Natural killer cell (primary cell): ENCODE measurements at regions of chr13 and their contacts with region 1.

Region 1: DNA sequence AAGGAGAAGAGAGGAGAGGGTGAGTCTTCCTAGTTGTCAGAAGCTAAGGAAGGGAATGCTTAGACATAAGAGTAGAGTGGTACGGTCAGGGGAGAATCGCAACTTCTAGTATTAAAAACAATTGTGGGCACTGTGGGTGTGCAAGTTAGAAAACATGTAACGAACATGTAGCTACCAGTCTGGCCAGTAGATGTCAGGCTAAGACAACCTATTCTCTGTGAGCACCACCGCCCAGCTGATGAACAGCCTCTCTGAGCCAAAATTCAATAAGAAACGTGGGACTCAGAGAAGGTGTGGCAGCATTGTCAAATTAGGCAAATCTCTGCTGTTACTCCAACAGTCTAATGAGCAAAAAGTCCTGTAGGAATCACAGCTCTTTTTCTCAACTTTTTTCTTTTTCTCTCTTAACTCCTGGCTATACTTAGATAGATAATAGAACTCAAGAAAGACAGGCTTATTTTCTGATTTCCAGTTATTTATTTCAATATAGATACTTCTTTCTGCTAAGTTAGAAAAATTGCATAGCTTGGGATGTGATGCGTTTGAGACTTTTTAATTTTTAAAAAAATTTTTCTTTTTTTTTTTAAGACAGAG is 186.2 kb downstream of the USP12 start:
- DNase-seq: peak; percentile 48 to 88
- ATAC-seq: peak; percentile 81 to 92 (median 91)
- H3K4me3 ChIP-seq: no peak overlapping the region
- H3K4me3 Mint-ChIP-seq: no peak overlapping the region
- H3K27ac ChIP-seq: no peak overlapping the region
- H3K27ac Mint-ChIP-seq: no peak overlapping the region
- H3K4me1 ChIP-seq: peaks cover 10% of the 10 kb centered on the region
- H3K4me1 Mint-ChIP-seq: peaks cover 4 to 5% of the 10 kb centered on the region in 2 donors
- H3K27me3 ChIP-seq: no peaks in the 10 kb centered on the region
- H3K27me3 Mint-ChIP-seq: peaks cover 10 to 15% of the 10 kb centered on the region in 2 donors
- CTCF ChIP-seq: peak; percentile 80

Region 2: GRCh38 chr13:26951581-26952177 is 33.7 kb before region 1 on chr13:
- intact Hi-C with region 1: no loop called
- DNase-seq: no peak
- ATAC-seq: no peak
- H3K4me3 ChIP-seq: no peak overlapping the region
- H3K4me3 Mint-ChIP-seq: no peak overlapping the region
- H3K27ac ChIP-seq: no peak overlapping the region
- H3K27ac Mint-ChIP-seq: no peak overlapping the region
- H3K4me1 ChIP-seq: no peaks in the 10 kb centered on the region
- H3K4me1 Mint-ChIP-seq: no peaks in the 10 kb centered on the region
- H3K27me3 ChIP-seq: no peaks in the 10 kb centered on the region
- H3K27me3 Mint-ChIP-seq: no peaks in the 10 kb centered on the region
- CTCF ChIP-seq: no peak

Region 3: DNA sequence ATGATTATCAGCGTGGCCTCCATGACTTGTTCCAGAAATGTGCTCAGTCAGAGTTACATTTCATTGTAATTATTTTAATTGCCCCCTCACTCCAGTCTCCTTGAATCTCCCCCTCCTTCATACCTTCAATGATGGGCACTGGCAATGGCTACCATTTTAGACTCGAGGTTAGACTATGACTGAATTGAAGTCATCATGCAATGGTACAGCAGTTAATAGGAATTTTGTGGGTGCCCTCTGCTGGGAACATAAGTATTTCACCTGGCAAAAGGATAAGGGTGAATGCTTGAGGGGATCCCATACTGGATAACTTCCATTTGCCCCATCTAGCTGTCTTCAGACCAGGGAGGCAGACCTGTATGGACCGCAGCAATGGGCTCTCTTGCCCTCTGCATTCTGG is 218.5 kb after region 1 on chr13:
- intact Hi-C with region 1: loop called (anchors 2 kb)
- DNase-seq: peak in 1 of 2 donors; percentile 25
- ATAC-seq: no peak
- H3K4me3 ChIP-seq: no peak overlapping the region
- H3K4me3 Mint-ChIP-seq: no peak overlapping the region
- H3K27ac ChIP-seq: no peak overlapping the region
- H3K27ac Mint-ChIP-seq: no peak overlapping the region
- H3K4me1 ChIP-seq: no peaks in the 10 kb centered on the region
- H3K4me1 Mint-ChIP-seq: no peaks in the 10 kb centered on the region
- H3K27me3 ChIP-seq: no peaks in the 10 kb centered on the region
- H3K27me3 Mint-ChIP-seq: peaks cover 9 to 18% of the 10 kb centered on the region in 2 donors
- CTCF ChIP-seq: no peak

Region 4: DNA sequence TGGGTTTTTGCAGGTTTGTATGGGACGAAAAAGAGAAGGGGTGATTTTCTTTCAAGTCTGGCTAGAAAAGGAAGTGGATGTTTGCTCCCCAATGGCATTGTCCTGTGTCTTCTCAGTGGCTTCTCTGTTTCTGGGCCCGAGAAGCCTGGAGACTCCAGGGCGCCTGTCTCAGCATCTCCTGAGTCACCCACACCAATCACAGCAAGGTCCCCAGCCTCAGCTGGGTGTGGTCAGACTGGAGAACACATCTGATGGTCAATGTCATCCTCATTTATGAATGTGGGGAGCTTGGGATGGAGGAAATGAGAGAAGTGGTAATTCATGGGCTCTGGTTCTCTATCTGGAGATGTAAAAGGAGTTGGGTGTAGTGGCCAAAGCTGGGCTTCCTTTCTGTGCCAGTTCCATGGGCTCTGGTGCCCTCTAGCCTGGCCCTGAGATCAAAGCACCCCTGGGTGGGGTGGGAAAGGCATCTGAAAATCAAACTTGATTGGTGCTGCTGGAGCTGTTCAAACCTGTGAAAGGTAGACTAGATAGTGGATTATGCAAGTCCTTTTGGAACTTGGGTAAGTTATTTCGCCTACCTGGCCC is 298.6 kb after region 1 on chr13:
- intact Hi-C with region 1: loop called (anchors 5 kb)
- DNase-seq: peak in 1 of 2 donors; percentile 26
- ATAC-seq: peak; percentile 47 to 59 (median 52)
- H3K4me3 ChIP-seq: no peak overlapping the region
- H3K4me3 Mint-ChIP-seq: no peak overlapping the region
- H3K27ac ChIP-seq: no peak overlapping the region
- H3K27ac Mint-ChIP-seq: no peak overlapping the region
- H3K4me1 ChIP-seq: no peaks in the 10 kb centered on the region
- H3K4me1 Mint-ChIP-seq: no peaks in the 10 kb centered on the region
- H3K27me3 ChIP-seq: no peaks in the 10 kb centered on the region
- H3K27me3 Mint-ChIP-seq: peaks cover 6 to 9% of the 10 kb centered on the region in 2 donors
- CTCF ChIP-seq: no peak

Region 5: DNA sequence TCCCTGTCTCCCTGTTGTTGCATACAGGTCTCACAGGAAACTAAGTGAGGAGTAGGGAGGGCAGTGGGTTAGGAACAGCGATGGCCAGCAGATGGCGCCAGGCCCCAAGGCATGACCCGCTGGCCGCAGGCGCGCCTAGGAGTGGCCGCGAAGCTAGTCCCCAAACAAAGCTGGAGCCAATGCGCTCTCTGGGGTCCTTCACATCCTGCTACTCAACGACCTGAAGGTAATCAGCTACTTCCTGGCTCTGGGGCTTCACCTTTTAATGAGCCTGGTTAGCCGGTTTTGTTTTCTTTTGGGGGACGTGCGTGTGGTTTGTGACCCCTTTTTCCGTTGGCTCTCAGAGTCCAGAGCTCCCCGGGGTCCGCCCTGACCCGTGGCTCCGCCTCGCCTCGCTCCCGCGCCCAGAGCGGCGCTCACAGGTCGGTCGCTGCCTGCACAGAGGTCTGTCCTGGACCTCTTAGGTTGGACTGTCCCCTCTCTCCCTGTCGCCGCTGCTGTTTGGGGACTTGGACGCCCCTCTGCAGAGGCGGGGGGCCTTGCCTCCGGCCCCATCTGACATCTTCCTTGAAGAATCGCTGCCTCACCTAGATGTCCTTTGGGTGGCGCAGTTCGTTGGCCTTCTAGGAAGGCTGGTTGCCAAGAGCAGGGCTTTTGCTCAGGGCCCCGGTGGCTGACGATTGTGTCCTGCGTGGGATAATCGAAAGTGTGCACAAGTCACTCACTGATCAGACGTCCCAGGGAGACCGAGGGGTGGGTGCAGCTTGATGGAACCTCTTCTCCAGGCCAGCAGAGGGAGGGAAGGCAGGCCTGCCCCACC is 376.9 kb after region 1 on chr13:
- intact Hi-C with region 1: loop called (anchors 1 kb)
- DNase-seq: peak; percentile 77 to 88
- ATAC-seq: peak; percentile 95 to 98 (median 98)
- H3K4me3 ChIP-seq: peak overlapping the region; percentile 31
- H3K4me3 Mint-ChIP-seq: peak overlapping the region; percentile 53
- H3K27ac ChIP-seq: no peak overlapping the region
- H3K27ac Mint-ChIP-seq: no peak overlapping the region
- H3K4me1 ChIP-seq: peaks cover 12% of the 10 kb centered on the region
- H3K4me1 Mint-ChIP-seq: peaks cover 0 to 12% of the 10 kb centered on the region in 2 donors
- H3K27me3 ChIP-seq: peaks cover 4% of the 10 kb centered on the region
- H3K27me3 Mint-ChIP-seq: peaks cover 9 to 23% of the 10 kb centered on the region in 2 donors
- CTCF ChIP-seq: peak; percentile 76

Region 6: DNA sequence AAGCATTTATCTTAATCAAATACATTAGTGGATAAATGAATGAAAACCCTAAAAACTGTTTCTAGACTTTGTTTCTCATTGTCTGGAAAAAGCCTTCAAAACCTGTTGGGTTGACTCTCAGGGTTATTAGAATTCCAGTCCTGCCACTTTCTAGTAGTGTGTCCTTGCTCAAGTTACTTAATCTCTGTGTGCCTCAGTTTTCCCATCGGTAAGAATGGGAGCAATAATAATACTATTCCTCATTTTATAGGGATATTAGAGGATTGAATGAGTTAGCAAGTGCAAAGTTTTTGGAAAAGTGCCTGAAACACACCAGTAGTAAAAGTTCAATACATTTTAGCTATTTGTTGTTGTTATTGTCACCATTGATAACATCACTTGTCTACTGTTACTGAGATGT is 1000.2 kb after region 1 on chr13:
- intact Hi-C with region 1: loop called (anchors 2 kb)
- DNase-seq: no peak
- ATAC-seq: no peak
- H3K4me3 ChIP-seq: no peak overlapping the region
- H3K4me3 Mint-ChIP-seq: no peak overlapping the region
- H3K27ac ChIP-seq: no peak overlapping the region
- H3K27ac Mint-ChIP-seq: no peak overlapping the region
- H3K4me1 ChIP-seq: no peaks in the 10 kb centered on the region
- H3K4me1 Mint-ChIP-seq: no peaks in the 10 kb centered on the region
- H3K27me3 ChIP-seq: peaks cover 3% of the 10 kb centered on the region
- H3K27me3 Mint-ChIP-seq: peaks cover 29 to 45% of the 10 kb centered on the region in 2 donors
- CTCF ChIP-seq: no peak